ENCODE measurements at regions of chr6 and their contacts with region 1.

Region 1: DNA sequence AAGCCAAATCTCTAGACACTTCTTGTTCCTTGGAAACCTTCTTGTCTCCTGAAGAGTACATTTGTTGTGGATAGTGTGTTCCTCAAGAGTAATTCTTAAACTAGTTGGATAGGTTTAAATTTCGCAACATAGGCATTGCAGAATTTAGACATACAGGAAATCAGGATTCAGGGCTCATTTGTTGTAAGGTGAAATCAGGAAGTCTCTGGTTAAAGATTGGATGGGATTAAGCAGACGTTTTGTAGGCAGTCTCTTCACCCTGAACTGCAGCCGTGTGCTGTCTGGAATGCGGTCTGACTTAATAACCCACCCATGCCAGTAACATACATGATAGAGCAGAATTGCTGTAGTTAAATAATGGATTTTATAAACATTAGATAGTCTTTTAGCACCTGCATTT is 21.7 kb downstream of the HIVEP1 start:
- DNase-seq: no peak
- H3K4me3 ChIP-seq: no peak overlapping the region
- CTCF ChIP-seq: no peak
- POLR2A ChIP-seq: no peak

Region 2: DNA sequence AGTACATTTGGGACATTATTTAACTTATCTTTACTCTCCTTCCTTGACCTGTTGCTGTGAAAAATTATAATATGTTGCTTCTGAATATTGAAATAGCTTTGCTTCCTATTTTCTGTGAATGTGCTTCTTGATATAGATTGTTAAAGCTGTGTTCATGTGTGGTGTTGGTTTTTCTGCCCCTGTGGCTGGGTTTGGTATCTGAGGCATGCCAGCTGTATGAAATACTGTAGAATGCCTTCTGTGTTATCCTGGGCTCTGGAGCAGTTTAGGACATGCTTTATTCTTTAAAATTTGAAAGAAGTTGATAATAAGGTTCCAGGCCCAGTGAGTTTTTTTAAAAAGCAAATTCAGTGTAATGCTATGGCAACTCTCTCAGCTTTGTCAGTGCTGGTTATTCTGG is 50.0 kb after region 1 on chr6:
- intact Hi-C with region 1: loop called (anchors 2 kb)
- DNase-seq: no peak
- H3K4me3 ChIP-seq: no peak overlapping the region
- CTCF ChIP-seq: no peak
- POLR2A ChIP-seq: no peak